ENCODE measurements at regions of chr12 and their contacts with region 1.

Region 1: GRCh38 chr12:116559162-116559935 is at the start of gene MAP1LC3B2:
- DNase-seq: peak; percentile 97
- ATAC-seq: peak; percentile 87
- H3K4me3 ChIP-seq: peak within 1 kb of the TSS; percentile 35
- H3K27ac ChIP-seq: peak within 1 kb of the TSS; percentile 90
- H3K4me1 ChIP-seq: peaks cover 32% of the 10 kb centered on the region
- H3K27me3 ChIP-seq: no peaks in the 10 kb centered on the region
- CTCF ChIP-seq: no peak
- EP300 ChIP-seq: peak; percentile 68 to 93
- POLR2A ChIP-seq: no peak
- RAD21 ChIP-seq: 0 out of 2 replicates have a peak, but pooled peaks have one; percentile 40
- polyA plus RNA-seq, gene MAP1LC3B2: 0.23 to 0.40 TPM

Region 2: DNA sequence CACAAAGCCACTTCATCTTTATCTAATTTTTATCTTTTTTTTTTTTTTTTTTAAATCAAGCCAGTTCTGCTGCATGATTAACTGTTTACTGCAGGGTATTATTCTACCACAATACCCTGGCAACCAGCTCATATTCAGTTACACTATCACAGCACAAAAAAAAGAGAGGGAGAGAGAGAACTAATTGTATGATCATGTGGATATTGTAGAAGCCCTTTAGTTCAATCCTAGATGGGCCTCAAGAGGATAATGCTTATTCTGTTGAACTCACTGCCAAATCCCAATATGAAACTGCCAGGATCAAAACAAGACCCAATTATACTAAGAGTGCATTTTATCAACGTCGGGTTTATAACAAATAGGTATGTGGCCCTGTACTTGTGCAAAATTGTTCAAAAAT is 333.3 kb before region 1 on chr12:
- CTCF ChIA-PET with region 1: no interaction called
- POLR2A ChIA-PET with region 1: no interaction called
- RAD21 ChIA-PET with region 1: no interaction called
- SMC1A ChIA-PET with region 1: no interaction called
- in situ Hi-C with region 1: no loop called
- intact Hi-C with region 1: no loop called
- DNase-seq: no peak
- ATAC-seq: no peak
- H3K4me3 ChIP-seq: no peak overlapping the region
- H3K27ac ChIP-seq: no peak overlapping the region
- H3K4me1 ChIP-seq: no peaks in the 10 kb centered on the region
- H3K27me3 ChIP-seq: no peaks in the 10 kb centered on the region
- CTCF ChIP-seq: no peak
- EP300 ChIP-seq: no peak
- POLR2A ChIP-seq: no peak
- RAD21 ChIP-seq: no peak

Region 3: DNA sequence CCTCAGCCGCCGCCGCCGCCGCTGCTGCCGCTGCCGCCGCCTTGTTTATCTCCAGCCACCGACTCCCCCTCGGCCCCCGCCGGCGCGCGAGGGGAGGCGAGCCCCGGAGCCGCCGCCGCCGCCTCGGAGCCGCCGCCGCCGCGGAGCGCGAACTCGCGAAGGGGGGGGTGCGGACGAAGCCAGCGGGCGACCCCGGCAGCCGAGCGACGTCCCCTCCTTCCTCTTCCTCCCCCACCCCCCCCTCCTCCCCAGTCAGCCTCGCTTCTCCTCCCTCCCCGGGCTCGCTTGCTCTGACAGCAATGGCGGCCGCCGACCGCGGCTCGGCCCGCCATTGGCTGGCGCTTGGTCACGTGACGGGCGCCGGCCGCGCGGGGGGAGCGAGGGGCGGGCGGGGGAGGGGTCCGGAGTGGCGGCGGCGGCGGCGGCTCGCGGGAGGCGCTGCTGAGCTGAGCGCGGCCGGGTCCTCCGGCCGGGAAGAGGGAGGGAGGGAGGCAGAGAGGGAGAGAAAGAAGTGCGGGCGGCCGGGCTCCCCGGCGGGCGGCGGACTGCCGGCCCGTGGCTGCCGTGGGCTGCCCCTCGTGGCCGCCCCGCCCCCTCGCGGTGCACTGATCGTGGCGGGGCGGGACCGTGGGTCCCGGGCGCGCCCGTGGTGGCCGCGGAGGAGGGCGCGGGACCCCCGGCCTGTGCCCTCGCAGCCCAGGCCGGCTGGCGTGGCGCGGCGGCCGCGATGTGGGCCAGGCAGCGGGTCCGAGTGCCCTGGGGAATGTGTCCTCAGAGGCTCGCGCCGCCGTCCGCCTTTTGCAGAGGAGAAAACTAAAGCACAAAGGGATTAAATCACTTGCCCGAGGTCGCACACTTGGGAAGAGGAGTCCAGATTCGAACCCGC is 281.7 kb before region 1 on chr12 and contains the start of gene MED13L:
- CTCF ChIA-PET with region 1: interaction called, 5 read pairs
- POLR2A ChIA-PET with region 1: interaction called, 6 read pairs
- RAD21 ChIA-PET with region 1: interaction called, 6 read pairs
- SMC1A ChIA-PET with region 1: interaction called, 4 read pairs
- in situ Hi-C with region 1: no loop called
- intact Hi-C with region 1: loop called (anchors 1 kb)
- DNase-seq: no peak
- ATAC-seq: peak; percentile 82
- H3K4me3 ChIP-seq: peak within 1 kb of the TSS; percentile 81
- H3K27ac ChIP-seq: peak within 1 kb of the TSS; percentile 43; the same call in 1 of the 2 replicates
- H3K4me1 ChIP-seq: no peaks in the 10 kb centered on the region
- H3K27me3 ChIP-seq: peaks cover 0 to 10% of the 10 kb centered on the region in 2 experiments; a peak in 2 of 4 replicates
- CTCF ChIP-seq: peak in 2 of 3 experiments; percentile 6 to 28; a peak in 2 of 6 replicates
- EP300 ChIP-seq: no peak
- POLR2A ChIP-seq: peak; percentile 75
- RAD21 ChIP-seq: 0 out of 2 replicates have a peak, but pooled peaks have one; percentile 25
- polyA plus RNA-seq, gene MED13L: 3.7 to 7.5 TPM

Region 4: GRCh38 chr12:116508145-116509121 is 50.9 kb before region 1 on chr12:
- CTCF ChIA-PET with region 1: no interaction called
- POLR2A ChIA-PET with region 1: no interaction called
- RAD21 ChIA-PET with region 1: no interaction called
- SMC1A ChIA-PET with region 1: no interaction called
- in situ Hi-C with region 1: no loop called
- intact Hi-C with region 1: no loop called
- DNase-seq: no peak
- ATAC-seq: peak; percentile 61
- H3K4me3 ChIP-seq: peak overlapping the region; percentile 47; the same call in 1 of the 2 replicates
- H3K27ac ChIP-seq: no peak overlapping the region
- H3K4me1 ChIP-seq: peaks cover 3% of the 10 kb centered on the region
- H3K27me3 ChIP-seq: peaks cover 0 to 3% of the 10 kb centered on the region in 2 experiments; a peak in 2 of 4 replicates
- CTCF ChIP-seq: no peak
- EP300 ChIP-seq: no peak
- POLR2A ChIP-seq: no peak
- RAD21 ChIP-seq: no peak

Region 5: GRCh38 chr12:116533343-116534251 is 25.8 kb before region 1 on chr12:
- CTCF ChIA-PET with region 1: interaction called, 23 read pairs
- POLR2A ChIA-PET with region 1: interaction called, 47 read pairs
- RAD21 ChIA-PET with region 1: interaction called, 64 read pairs
- SMC1A ChIA-PET with region 1: interaction called, 106 read pairs
- in situ Hi-C with region 1: no loop called
- intact Hi-C with region 1: loop called (anchors 1 kb)
- DNase-seq: no peak
- ATAC-seq: peak; percentile 80
- H3K4me3 ChIP-seq: peak overlapping the region; percentile 65
- H3K27ac ChIP-seq: peak overlapping the region; percentile 39; the same call in 1 of the 2 replicates
- H3K4me1 ChIP-seq: peaks cover 24% of the 10 kb centered on the region
- H3K27me3 ChIP-seq: no peaks in the 10 kb centered on the region
- CTCF ChIP-seq: no peak
- EP300 ChIP-seq: no peak
- POLR2A ChIP-seq: peak; percentile 35; the same call in 1 of the 2 replicates
- RAD21 ChIP-seq: no peak

Region 6: DNA sequence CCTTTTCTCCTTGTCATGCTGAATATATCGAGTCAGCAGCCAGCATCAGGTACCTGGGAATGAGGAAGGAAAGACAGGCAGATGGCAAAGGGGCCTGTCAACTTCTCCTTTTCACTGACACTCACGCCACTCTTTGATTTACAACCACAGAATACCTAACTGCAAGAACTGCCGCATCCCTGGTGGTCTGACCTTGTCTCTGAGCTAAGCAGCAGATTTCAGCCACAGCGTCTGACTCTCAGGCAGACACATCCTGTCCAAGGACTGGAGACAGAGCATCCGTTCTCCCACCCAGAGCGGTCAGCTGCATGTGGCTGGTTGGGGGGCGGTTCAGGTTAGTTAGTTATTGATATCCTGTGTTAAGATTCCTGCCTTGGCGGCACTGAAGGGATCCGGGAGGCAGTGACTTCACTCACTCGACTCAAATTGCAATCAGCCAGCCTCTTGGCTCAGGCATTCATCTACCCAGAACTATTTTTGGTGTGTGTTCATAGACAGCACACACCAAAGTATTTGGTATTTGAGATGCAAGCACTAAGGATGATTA is 11.3 kb before region 1 on chr12:
- CTCF ChIA-PET with region 1: interaction called, 4 read pairs
- POLR2A ChIA-PET with region 1: interaction called, 5 read pairs
- RAD21 ChIA-PET with region 1: interaction called, 8 read pairs
- SMC1A ChIA-PET with region 1: interaction called, 11 read pairs
- in situ Hi-C with region 1: no loop called
- intact Hi-C with region 1: no loop called
- DNase-seq: no peak
- ATAC-seq: peak; percentile 91
- H3K4me3 ChIP-seq: no peak overlapping the region
- H3K27ac ChIP-seq: no peak overlapping the region
- H3K4me1 ChIP-seq: peaks cover 13% of the 10 kb centered on the region
- H3K27me3 ChIP-seq: no peaks in the 10 kb centered on the region
- CTCF ChIP-seq: no peak
- EP300 ChIP-seq: peak in 1 of 2 experiments; percentile 31; a peak in 1 of 4 replicates
- POLR2A ChIP-seq: no peak
- RAD21 ChIP-seq: no peak

Region 7: GRCh38 chr12:116673681-116674111 is 114.3 kb after region 1 on chr12:
- CTCF ChIA-PET with region 1: no interaction called
- POLR2A ChIA-PET with region 1: interaction called, 4 read pairs
- RAD21 ChIA-PET with region 1: interaction called, 7 read pairs
- SMC1A ChIA-PET with region 1: interaction called, 9 read pairs
- in situ Hi-C with region 1: no loop called
- intact Hi-C with region 1: loop called (anchors 2 kb)
- DNase-seq: no peak
- ATAC-seq: no peak
- H3K4me3 ChIP-seq: no peak overlapping the region
- H3K27ac ChIP-seq: peak overlapping the region; percentile 51
- H3K4me1 ChIP-seq: peaks cover 23% of the 10 kb centered on the region
- H3K27me3 ChIP-seq: no peaks in the 10 kb centered on the region
- CTCF ChIP-seq: peak in 1 of 3 experiments; percentile 18; a peak in 1 of 6 replicates
- EP300 ChIP-seq: no peak
- POLR2A ChIP-seq: no peak
- RAD21 ChIP-seq: 0 out of 2 replicates have a peak, but pooled peaks have one; percentile 7